Dorsolateral prefrontal cortex (tissue), 120 donors: ENCODE measurements at regions of chr2 and their contacts with region 1.

Region 1: DNA sequence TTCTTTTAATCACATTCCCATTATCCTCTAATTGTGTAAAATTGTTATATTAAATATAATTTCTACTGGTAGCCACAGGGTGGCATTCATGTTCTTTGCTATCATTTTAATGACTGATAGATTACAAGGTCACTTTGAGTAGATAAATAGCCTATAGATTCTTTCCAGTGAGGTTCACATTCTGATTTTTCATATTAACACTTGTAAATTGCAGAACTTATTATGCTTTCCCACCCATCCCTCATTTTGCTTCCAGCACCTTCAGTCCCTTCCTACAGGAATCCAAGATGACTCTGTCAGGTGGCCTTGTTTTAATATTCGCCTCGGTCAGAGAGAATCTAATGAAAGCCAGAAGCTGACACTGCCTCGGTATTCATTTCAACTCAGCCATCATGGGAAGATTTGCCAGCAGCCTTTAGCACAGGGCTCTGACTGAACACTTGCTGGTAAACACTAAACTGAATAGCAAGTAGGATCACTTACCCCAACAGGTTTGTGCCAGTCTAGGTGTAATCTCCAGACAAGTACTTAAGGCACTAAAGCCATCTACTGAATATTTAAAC is 101.2 kb upstream of the FSHR start:
- DNase-seq: peak in 1 of 10 donors; percentile 37
- H3K4me3 ChIP-seq: no peak overlapping the region
- H3K27ac ChIP-seq: peak overlapping the region in 11 of 59 donors; percentile 5 to 64 (median 44)
- H3K27me3 ChIP-seq: no peaks in the 10 kb centered on the region
- CTCF ChIP-seq: peak in 55 of 56 donors; percentile 18 to 78 (median 54)

Region 2: DNA sequence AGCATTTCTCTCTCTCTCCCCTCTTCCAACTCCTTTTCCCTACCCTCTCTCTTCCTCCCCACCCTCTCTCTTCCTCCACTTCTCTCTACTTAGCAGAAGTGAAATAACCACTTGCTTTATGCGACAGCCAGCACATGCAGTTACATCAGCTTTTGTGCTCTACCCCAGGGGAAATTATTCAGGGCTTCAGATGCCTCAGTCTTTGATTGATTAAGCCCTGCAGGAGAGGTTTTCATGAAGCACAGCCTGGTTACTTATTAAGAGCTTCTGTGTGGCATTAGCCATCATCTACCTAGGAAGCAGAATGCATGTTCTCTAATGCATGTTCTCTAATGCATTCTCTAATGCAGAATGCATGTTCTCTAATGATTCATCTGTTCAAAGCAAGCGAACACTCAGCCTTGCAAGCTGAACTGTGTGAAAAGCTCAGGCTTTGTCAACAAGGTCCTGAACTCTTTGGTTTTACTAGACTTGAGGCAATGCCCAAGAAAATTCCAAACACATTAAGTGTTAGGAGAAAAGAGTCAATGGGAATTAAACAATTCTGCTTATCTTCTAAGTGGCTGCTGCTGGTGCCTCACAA is 556.1 kb before region 1 on chr2:
- intact Hi-C with region 1: no loop called
- DNase-seq: no peak
- H3K4me3 ChIP-seq: no peak overlapping the region
- H3K27ac ChIP-seq: no peak overlapping the region
- H3K27me3 ChIP-seq: no peaks in the 10 kb centered on the region
- CTCF ChIP-seq: no peak

Region 3: DNA sequence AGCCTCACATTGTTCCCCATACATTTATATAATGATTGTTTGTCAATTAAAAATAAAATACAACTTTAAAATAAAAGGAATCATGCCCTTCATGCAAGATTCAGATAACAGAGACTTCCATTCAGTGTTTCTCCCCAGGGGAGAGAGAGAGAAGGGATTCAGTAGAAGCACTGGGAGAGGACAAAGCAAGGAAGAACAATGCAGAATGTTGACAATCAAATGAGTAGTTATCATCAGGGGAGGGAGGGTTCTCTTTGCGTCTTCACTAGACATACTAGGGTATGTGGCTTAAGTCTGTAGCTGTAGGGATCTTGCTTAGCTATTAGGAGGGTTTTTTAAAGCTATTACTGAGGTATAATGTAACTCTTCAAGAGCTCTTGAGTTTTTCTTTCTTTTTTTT is 131.9 kb before region 1 on chr2:
- intact Hi-C with region 1: no loop called
- DNase-seq: no peak
- H3K4me3 ChIP-seq: no peak overlapping the region
- H3K27ac ChIP-seq: no peak overlapping the region
- H3K27me3 ChIP-seq: peaks cover 0 to 4% (median 0%) of the 10 kb centered on the region in 45 donors
- CTCF ChIP-seq: no peak

Region 4: DNA sequence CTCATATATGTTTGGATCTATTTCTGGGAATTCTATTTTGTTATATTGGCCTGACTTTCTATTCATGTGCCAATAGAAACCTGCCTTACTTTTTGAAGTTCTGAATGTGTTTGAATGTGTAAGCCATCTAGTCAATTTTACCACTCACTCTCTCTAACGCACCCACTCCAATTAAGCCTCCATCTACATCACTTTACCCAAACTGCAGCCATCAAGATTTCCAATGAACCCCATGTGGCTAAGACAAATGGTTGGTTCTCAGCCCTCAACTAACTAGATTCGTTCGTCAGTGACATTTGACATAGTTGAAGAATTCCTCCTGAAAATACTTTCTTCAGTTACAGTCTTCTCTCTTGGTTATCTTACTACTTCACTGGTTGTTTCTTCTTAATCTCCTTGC is 36.1 kb after region 1 on chr2:
- intact Hi-C with region 1: loop called in 1 of 2 experiments (anchors 2 kb)
- DNase-seq: no peak
- H3K4me3 ChIP-seq: no peak overlapping the region
- H3K27ac ChIP-seq: peak overlapping the region in 15 of 59 donors; percentile 2 to 93 (median 21)
- H3K27me3 ChIP-seq: no peaks in the 10 kb centered on the region
- CTCF ChIP-seq: no peak

Region 5: GRCh38 chr2:49332415-49332814 is 76.9 kb after region 1 on chr2:
- intact Hi-C with region 1: loop called in 1 of 2 experiments (anchors 5 kb)
- DNase-seq: no peak
- H3K4me3 ChIP-seq: no peak overlapping the region
- H3K27ac ChIP-seq: no peak overlapping the region
- H3K27me3 ChIP-seq: no peaks in the 10 kb centered on the region
- CTCF ChIP-seq: peak in 36 of 56 donors; percentile 7 to 56 (median 30)